Ovary (tissue), 10 donors: ENCODE measurements at regions of chr15 and their contacts with region 1.

Region 1: GRCh38 chr15:98177924-98178592 is 217.6 kb downstream of the ARRDC4 start:
- DNase-seq: peak in 1 of 5 donors; percentile 28
- H3K4me3 ChIP-seq: no peak overlapping the region
- H3K27ac ChIP-seq: no peak overlapping the region
- H3K4me1 ChIP-seq: no peaks in the 10 kb centered on the region
- H3K27me3 ChIP-seq: no peaks in the 10 kb centered on the region
- CTCF ChIP-seq: peak in 2 of 3 donors; percentile 23 to 27
- EP300 ChIP-seq: no peak
- POLR2A ChIP-seq: no peak

Region 2: DNA sequence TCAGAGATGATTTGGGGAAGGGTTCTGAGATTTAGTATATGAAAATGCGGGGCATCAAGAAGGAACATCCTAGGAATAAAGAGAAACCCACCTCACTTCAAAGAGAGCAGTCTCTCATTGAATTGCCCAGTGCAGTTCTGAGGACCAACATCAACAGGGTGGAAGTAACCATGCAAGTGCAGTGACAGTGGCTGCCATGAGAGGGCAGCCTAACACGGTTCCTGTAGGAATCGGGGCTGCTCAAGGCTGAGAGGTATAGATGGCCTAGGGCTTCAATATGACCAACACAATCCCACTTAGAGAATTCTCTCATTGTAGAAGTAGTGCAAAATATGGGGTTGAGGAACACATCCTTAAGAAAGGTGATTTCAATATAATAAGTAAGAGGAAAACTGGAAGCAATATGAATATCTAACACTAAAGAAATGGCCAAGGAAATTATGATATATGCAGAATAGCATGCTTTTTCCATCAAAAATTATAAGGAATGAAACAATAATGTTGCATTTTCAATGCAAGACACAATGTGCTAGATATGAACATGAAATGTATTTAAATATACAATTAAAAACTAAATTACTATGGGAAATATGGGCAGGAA is 268.7 kb before region 1 on chr15:
- intact Hi-C with region 1: loop called in 2 of 4 experiments (anchors 5 to 10 kb)
- DNase-seq: peak; percentile 12 to 59 (median 32)
- H3K4me3 ChIP-seq: no peak overlapping the region
- H3K27ac ChIP-seq: no peak overlapping the region
- H3K4me1 ChIP-seq: no peaks in the 10 kb centered on the region
- H3K27me3 ChIP-seq: no peaks in the 10 kb centered on the region
- CTCF ChIP-seq: peak in 2 of 3 donors; percentile 32 to 41
- EP300 ChIP-seq: no peak
- POLR2A ChIP-seq: no peak

Region 3: GRCh38 chr15:98103570-98103969 is 74.5 kb before region 1 on chr15:
- intact Hi-C with region 1: loop called in 1 of 4 experiments (anchors 10 kb)
- DNase-seq: no peak
- H3K4me3 ChIP-seq: no peak overlapping the region
- H3K27ac ChIP-seq: no peak overlapping the region
- H3K4me1 ChIP-seq: no peaks in the 10 kb centered on the region
- H3K27me3 ChIP-seq: no peaks in the 10 kb centered on the region
- CTCF ChIP-seq: no peak
- EP300 ChIP-seq: no peak
- POLR2A ChIP-seq: no peak